ENCODE measurements at regions of chr10 and their contacts with region 1.

Region 1: DNA sequence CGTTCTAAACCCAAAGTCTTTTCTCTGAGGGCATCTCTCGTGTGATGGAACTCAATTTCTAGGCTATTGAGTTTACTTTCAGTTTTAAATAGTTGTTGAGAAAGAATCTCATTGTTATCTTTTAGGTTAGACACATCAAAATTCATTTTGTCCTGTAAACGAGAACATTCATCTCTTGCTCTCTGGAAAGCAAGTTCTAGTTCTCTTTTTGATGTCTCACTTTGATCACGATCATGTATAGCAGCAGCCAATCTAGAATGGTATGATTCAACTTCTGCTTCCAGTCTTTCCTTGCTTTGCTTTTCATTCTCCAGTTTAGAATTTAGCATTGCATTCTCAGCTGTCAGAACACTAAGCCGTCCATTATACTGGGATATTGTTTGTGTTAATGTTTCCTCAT is 65.1 kb downstream of the ANKRD26 start:
- DNase-seq: no peak
- H3K4me3 Mint-ChIP-seq: peak overlapping the region; percentile 64
- H3K27ac Mint-ChIP-seq: peak overlapping the region; percentile 66
- H3K4me1 Mint-ChIP-seq: peaks cover 16% of the 10 kb centered on the region
- H3K27me3 Mint-ChIP-seq: no peaks in the 10 kb centered on the region

Region 2: DNA sequence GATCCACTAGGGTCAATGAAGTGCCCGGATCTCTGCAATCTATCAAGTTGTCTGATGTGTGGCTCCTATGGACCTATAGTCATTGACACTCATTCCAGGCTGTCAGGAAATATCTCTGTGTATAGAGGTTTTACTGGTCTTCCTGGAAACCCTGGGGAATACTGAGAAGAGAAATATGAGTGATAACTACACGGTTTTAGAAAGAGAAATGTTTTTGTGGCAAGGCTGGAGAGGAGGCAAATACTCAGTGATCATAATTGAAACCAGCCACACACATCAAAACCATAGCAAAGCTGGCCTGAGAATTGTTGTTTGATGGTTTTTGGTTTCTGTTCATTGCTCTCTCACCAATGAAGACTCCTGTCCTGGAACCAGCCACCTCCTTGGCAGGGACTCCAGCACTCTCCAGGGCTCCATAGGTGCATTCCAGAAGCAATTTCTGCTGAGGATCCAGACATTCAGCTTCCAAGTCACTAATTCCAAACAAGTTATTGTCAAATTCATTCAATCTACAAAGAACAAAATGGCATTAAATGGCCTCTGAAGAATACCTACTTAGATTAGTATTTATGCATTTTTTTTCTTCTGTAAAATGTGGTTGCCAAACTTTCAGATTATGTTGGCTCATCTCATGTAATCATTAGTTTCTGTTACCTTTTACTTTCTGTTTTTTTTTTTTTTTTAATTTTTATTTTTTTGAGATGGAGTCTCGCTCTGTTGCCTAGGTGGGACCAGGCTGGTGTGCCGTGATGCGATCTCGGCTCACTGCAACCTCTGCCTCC is 65.8 kb before region 1 on chr10:
- intact Hi-C with region 1: loop called (anchors 2 kb)
- DNase-seq: no peak
- H3K4me3 Mint-ChIP-seq: no peak overlapping the region
- H3K27ac Mint-ChIP-seq: peak overlapping the region; percentile 21
- H3K4me1 Mint-ChIP-seq: peaks cover 37% of the 10 kb centered on the region
- H3K27me3 Mint-ChIP-seq: no peaks in the 10 kb centered on the region